Colonic mucosa (tissue), 4 donors: ENCODE measurements at regions of chr17 and their contacts with region 1.

Region 1: DNA sequence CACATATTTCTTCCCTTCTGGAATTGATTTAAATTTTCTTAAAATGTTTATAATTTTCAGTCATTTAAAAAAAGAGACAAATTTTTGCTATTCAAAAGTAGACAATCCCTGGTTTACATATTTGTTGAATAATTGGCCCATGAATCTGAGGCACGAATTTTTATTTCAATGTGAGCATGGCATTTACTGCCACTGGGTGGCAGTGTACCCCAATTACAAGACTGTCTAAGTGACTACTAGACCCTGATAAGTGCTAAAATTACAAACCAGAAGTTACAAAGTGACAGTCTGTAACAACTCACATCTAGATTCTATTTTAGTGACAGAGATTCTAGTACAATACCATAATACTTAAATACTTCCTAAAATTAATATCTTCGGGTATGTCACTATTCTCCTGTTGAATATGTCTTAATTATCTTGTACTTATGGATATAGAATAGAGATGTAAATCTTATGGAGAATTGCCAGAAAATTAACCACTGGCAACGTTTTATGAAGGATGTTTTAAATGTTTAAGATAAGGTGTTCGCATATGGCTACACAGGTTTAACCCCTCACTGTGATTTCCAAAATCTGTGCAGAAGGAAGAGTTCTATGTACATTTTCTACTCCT is 235.8 kb downstream of the MAP2K4 start:
- DNase-seq: peak; percentile 35
- H3K4me3 ChIP-seq: no peak overlapping the region
- H3K27ac ChIP-seq: no peak overlapping the region
- H3K4me1 ChIP-seq: no peaks in the 10 kb centered on the region
- H3K27me3 ChIP-seq: no peaks in the 10 kb centered on the region
- CTCF ChIP-seq: peak; percentile 66

Region 2: DNA sequence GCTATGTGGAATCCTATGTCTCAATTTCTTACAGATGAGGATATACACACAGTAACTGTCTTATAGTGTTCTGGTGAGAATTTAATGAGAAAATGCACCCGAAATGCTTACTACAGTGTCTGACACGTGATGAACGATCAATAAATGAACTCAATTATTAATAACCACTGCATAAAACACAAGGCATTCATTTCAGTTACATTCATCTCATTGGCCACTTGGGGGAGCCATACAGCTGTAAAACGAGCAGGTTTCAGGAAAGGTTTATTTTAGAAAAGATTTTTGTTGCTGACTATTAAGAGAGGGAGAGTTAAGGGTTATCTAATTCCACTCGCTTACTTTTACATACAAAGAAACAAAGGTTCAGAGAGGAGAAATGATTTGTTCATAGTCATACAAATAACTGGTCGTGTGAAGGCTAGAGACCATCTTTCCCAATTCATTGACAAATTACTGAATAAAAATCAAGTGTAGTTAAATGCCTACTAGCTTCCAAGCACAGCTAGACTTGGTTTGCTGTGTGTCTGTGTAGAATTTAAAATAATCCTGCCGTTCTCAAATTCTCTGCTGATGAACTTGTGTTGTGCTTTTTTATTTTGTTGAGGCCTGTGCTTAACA is 75.7 kb before region 1 on chr17:
- intact Hi-C with region 1: loop called (anchors 10 kb)
- DNase-seq: peak; percentile 39
- H3K4me3 ChIP-seq: no peak overlapping the region
- H3K27ac ChIP-seq: no peak overlapping the region
- H3K4me1 ChIP-seq: no peaks in the 10 kb centered on the region
- H3K27me3 ChIP-seq: no peaks in the 10 kb centered on the region
- CTCF ChIP-seq: peak; percentile 58